GM10248 (cell line): ENCODE measurements at regions of chr1 and their contacts with region 1.

Region 1: DNA sequence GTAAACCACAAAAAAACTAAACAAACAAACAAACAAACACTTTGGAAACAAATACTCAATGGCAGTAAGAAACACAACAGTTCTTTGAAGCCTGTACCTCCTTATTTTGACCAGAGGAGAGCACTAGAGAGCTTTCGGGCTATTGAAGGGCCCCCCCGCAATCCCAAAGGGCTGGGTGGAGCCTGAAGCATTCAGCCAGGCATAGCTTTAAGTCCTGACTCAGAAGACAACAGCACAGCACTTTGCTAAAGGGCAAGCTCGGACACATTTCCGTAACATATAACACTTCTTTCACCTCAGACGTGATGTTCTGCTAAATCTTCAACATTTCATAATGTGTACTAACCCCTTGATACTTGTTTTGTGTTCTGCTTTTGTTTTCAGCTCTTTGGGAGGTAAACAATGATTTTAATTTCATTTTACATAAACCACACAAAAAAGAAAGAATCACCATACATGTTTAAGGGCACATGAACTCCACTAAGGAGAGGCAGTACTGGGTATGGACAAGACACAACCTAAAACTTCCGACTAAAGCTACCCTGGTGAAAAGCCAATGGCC is 9.7 kb upstream of the SHCBP1L start:
- DNase-seq: peak; percentile 84
- CTCF ChIP-seq: peak; percentile 83

Region 2: GRCh38 chr1:182974506-182975191 is 12.0 kb after region 1 on chr1:
- CTCF ChIA-PET with region 1: interaction called, 16 read pairs
- POLR2A ChIA-PET with region 1: no interaction called
- DNase-seq: no peak
- CTCF ChIP-seq: no peak

Region 3: GRCh38 chr1:183227963-183228649 is 265.5 kb after region 1 on chr1:
- CTCF ChIA-PET with region 1: interaction called, 105 read pairs
- POLR2A ChIA-PET with region 1: no interaction called
- DNase-seq: peak; percentile 70
- CTCF ChIP-seq: peak; percentile 81

Region 4: GRCh38 chr1:183281553-183282091 is 319.0 kb after region 1 on chr1:
- CTCF ChIA-PET with region 1: interaction called, 11 read pairs
- POLR2A ChIA-PET with region 1: no interaction called
- DNase-seq: peak; percentile 80
- CTCF ChIP-seq: peak; percentile 88

Region 5: GRCh38 chr1:183318433-183318832 is 355.8 kb after region 1 on chr1:
- CTCF ChIA-PET with region 1: interaction called, 33 read pairs
- POLR2A ChIA-PET with region 1: no interaction called
- DNase-seq: peak; percentile 69
- CTCF ChIP-seq: peak; percentile 62